Heart left ventricle (tissue), 16 donors: ENCODE measurements at regions of chr17 and their contacts with region 1.

Region 1: DNA sequence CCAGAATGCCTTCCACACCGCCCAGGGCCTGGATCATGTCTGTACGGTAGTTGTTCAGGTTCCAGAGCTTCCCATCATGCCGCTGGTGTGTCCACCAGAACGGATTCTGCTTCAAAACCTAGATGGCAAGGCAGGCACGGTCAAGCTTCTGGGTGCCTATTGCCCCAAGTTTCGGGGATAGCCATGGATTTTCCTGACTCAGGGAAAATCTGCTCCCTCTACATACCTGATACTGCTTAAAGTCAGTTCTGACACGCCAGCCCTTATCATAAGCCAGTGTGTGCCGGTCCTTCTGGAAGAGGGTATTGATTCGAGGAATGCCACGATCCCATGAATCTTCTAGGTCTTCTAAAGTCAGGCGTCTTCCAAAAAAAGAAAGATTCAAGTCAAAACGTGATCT is 11.4 kb upstream of the RILP start:
- DNase-seq: no peak
- ATAC-seq: no peak
- H3K4me3 ChIP-seq: no peak overlapping the region
- H3K27ac ChIP-seq: no peak overlapping the region
- H3K4me1 ChIP-seq: no peaks in the 10 kb centered on the region
- H3K27me3 ChIP-seq: no peaks in the 10 kb centered on the region
- CTCF ChIP-seq: no peak
- POLR2A ChIP-seq: no peak

Region 2: DNA sequence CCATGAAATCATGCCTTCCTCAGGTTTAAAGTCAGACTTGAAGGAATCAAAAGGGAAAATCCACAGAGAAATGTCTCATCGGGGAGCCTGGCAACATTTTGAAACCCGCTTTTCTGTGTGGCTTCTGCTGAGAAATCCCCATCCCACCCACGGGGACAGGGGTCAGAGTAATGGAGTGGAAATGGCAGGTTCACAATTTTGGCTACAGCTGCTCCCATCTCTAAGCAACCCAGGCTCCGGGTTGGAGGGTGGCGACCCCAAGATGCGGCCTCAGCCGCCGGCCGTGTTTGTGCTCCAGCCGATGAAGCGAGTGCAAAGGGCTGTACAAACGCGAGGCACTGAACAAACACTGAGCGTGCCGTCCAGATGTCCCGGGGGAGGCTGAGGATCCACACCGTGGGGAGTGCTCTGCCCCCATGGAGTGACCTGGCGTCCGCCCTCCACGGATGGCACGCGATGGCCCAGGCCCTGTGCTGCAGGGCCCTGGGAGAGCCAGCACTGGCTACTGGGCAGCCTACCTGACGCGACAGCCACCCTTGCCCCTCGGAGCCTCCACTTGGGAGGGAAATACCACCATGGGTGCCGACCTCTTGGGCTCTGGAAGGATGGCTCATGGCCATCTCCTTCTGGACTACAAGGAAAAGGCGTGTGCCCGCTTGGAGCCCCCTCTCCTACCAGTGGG is 54.6 kb before region 1 on chr17:
- intact Hi-C with region 1: no loop called
- DNase-seq: no peak
- ATAC-seq: peak in 1 of 4 donors; percentile 8
- H3K4me3 ChIP-seq: no peak overlapping the region
- H3K27ac ChIP-seq: peak overlapping the region in 7 of 12 donors; percentile 15 to 91 (median 37)
- H3K4me1 ChIP-seq: peaks cover 0 to 52% (median 0%) of the 10 kb centered on the region in 12 donors
- H3K27me3 ChIP-seq: no peaks in the 10 kb centered on the region
- CTCF ChIP-seq: no peak
- POLR2A ChIP-seq: no peak

Region 3: GRCh38 chr17:1783834-1784611 is 123.0 kb after region 1 on chr17:
- intact Hi-C with region 1: loop called in 6 of 10 experiments (anchors 5 to 10 kb)
- DNase-seq: peak in 4 of 5 donors; percentile 75 to 91 (median 82)
- ATAC-seq: peak; percentile 74 to 86 (median 80)
- H3K4me3 ChIP-seq: peak overlapping the region in 8 of 12 donors; percentile 12 to 43 (median 20)
- H3K27ac ChIP-seq: peak overlapping the region; percentile 83 to 97 (median 92)
- H3K4me1 ChIP-seq: peaks cover 5 to 89% (median 60%) of the 10 kb centered on the region in 12 donors
- H3K27me3 ChIP-seq: no peaks in the 10 kb centered on the region
- CTCF ChIP-seq: peak; percentile 45 to 81 (median 72)
- POLR2A ChIP-seq: peak in 1 of 2 donors; percentile 69

Region 4: GRCh38 chr17:1865252-1866037 is 204.4 kb after region 1 on chr17:
- intact Hi-C with region 1: loop called in 2 of 10 experiments (anchors 10 kb)
- DNase-seq: no peak
- ATAC-seq: peak in 2 of 4 donors; percentile 41 to 51
- H3K4me3 ChIP-seq: no peak overlapping the region
- H3K27ac ChIP-seq: no peak overlapping the region
- H3K4me1 ChIP-seq: no peaks in the 10 kb centered on the region
- H3K27me3 ChIP-seq: no peaks in the 10 kb centered on the region
- CTCF ChIP-seq: peak; percentile 49 to 73 (median 66)
- POLR2A ChIP-seq: no peak